Endothelial cell of umbilical vein (primary cell): ENCODE measurements at regions of chr2 and their contacts with region 1.

Region 1: GRCh38 chr2:197710424-197711042 is 5.4 kb downstream of the MARS2 start:
- DNase-seq: no peak
- H3K4me3 ChIP-seq: no peak overlapping the region
- H3K27ac ChIP-seq: no peak overlapping the region
- H3K4me1 ChIP-seq: peaks cover 18% of the 10 kb centered on the region
- H3K27me3 ChIP-seq: no peaks in the 10 kb centered on the region
- CTCF ChIP-seq: no peak
- POLR2A ChIP-seq: no peak

Region 2: DNA sequence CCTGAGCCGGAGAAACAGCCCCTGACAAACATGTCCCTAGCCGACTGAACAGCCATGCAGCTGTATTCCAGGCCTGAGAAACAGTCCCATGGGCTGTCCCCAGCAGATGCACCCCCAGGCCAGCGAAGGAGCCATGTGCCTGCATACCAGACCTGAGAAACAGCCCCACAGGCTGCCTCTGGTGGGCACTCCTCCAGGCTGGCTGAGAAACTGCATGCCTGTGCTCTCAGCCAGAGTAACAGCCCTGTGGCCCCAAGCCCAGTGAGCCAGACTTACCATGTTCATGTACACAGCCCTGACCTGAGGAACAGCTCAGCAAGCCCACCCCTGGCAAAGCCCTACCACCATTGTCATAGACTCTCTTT is 49.7 kb after region 1 on chr2:
- CTCF ChIA-PET with region 1: no interaction called
- POLR2A ChIA-PET with region 1: no interaction called
- dilution Hi-C with region 1: no loop called
- intact Hi-C with region 1: loop called (anchors 5 kb)
- DNase-seq: no peak
- H3K4me3 ChIP-seq: no peak overlapping the region
- H3K27ac ChIP-seq: no peak overlapping the region
- H3K4me1 ChIP-seq: no peaks in the 10 kb centered on the region
- H3K27me3 ChIP-seq: peaks cover 0 to 3% of the 10 kb centered on the region in 2 experiments
- CTCF ChIP-seq: no peak
- POLR2A ChIP-seq: no peak

Region 3: GRCh38 chr2:197869501-197870111 is 159.1 kb after region 1 on chr2:
- CTCF ChIA-PET with region 1: no interaction called
- POLR2A ChIA-PET with region 1: no interaction called
- dilution Hi-C with region 1: no loop called
- intact Hi-C with region 1: no loop called
- DNase-seq: no peak
- H3K4me3 ChIP-seq: no peak overlapping the region
- H3K27ac ChIP-seq: no peak overlapping the region
- H3K4me1 ChIP-seq: no peaks in the 10 kb centered on the region
- H3K27me3 ChIP-seq: no peaks in the 10 kb centered on the region
- CTCF ChIP-seq: no peak
- POLR2A ChIP-seq: no peak